ENCODE measurements at regions of chr6 and their contacts with region 1.

Region 1: DNA sequence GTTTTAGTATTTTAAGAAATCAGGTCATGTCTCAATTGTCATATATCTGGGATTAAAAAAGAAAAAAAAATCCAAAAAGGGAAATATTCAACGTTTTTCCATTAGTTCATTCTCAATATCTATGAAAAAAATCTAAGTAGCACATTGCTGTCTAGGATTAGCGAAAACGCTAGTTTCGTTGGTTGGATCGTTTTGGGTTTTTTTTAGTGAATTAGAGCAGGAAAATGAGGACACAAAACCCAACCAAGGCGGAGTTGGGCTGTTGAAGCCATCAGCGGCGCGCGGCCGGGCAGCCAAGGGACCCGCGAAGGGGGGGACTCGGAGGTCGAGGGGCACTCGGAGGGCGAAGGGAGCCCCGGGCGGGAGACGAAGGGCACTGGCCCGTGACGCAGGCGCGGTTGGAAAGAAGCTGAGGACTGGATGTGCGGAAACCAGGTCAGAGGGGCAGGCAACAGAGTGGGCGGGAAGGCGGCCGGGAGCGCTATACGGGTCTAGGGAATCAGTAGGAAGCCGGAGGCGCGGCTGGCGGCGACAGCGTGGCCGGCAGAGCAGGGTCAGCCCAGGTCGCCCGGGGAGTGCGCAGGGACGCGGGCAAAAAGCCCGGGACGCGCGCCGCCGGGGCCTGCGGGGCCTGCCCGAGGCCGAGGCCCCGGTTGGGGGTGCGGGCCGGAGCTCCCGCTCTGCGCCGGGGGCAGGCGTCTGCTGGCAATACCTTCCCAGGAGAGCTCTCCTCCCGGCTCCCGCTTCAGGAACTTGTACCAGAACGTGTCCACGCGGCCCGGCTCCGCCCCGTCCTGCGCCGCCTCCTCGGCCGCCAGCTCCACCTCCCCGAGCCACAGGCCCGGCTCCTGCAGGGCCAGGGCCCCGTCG is 599 bp downstream of the EPM2A start:
- DNase-seq: peak; percentile 88 to 92
- ATAC-seq: peak; percentile 91 to 97 (median 92)
- H3K4me3 ChIP-seq: peak overlapping the region; percentile 61 to 91 (median 73)
- H3K27ac ChIP-seq: peak overlapping the region; percentile 94 to 99 (median 97)
- H3K4me1 ChIP-seq: peaks cover 0 to 40% (median 21%) of the 10 kb centered on the region in 9 donors
- H3K27me3 ChIP-seq: no peaks in the 10 kb centered on the region
- CTCF ChIP-seq: no peak

Region 2: DNA sequence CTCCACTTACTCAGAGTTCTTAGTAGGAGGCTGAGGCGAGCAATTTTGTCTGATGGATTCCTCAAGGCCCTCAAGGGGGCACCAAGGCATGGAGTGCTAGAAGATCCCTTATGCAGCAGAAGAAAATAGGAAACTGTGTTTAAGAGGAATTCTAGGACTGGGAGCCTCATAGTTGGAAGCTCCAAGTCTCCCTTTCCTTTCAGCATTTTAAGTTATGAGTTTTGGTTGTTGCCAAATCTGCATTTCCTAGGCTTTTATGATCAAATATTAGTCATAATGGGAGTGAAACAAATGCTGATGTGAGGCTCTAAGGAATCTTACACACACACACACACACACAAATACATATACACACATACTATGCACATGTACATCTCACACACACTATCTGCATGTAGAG is 735.6 kb before region 1 on chr6:
- intact Hi-C with region 1: no loop called
- DNase-seq: no peak
- ATAC-seq: no peak
- H3K4me3 ChIP-seq: no peak overlapping the region
- H3K27ac ChIP-seq: no peak overlapping the region
- H3K4me1 ChIP-seq: no peaks in the 10 kb centered on the region
- H3K27me3 ChIP-seq: no peaks in the 10 kb centered on the region
- CTCF ChIP-seq: peak in 1 of 9 donors; percentile 8

Region 3: GRCh38 chr6:145368075-145368474 is 366.6 kb before region 1 on chr6:
- intact Hi-C with region 1: no loop called
- DNase-seq: peak in 1 of 2 donors; percentile 25
- ATAC-seq: peak in 7 of 8 donors; percentile 10 to 75 (median 52)
- H3K4me3 ChIP-seq: no peak overlapping the region
- H3K27ac ChIP-seq: no peak overlapping the region
- H3K4me1 ChIP-seq: peaks cover 0 to 12% (median 3%) of the 10 kb centered on the region in 9 donors
- H3K27me3 ChIP-seq: no peaks in the 10 kb centered on the region
- CTCF ChIP-seq: no peak

Region 4: DNA sequence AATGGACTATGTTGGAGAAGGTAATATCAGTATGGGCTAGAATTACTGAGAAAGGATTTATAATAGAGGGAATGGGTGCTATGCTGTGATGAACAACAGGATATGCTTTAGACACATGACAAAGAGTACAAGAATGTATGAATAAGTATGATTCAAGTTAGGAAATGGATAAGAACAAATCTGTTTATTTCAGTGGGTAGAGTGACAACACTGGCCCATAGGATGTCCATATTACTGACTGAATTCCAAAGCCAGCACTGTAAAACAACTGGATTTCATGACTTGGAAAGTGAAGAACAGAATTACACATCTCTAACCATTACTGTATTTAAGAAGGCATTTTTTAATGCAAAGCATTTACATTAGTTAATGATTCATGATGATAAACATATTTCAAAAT is 35.3 kb before region 1 on chr6:
- intact Hi-C with region 1: no loop called
- DNase-seq: no peak
- ATAC-seq: no peak
- H3K4me3 ChIP-seq: no peak overlapping the region
- H3K27ac ChIP-seq: no peak overlapping the region
- H3K4me1 ChIP-seq: peaks cover 0 to 5% (median 0%) of the 10 kb centered on the region in 9 donors
- H3K27me3 ChIP-seq: no peaks in the 10 kb centered on the region
- CTCF ChIP-seq: no peak

Region 5: DNA sequence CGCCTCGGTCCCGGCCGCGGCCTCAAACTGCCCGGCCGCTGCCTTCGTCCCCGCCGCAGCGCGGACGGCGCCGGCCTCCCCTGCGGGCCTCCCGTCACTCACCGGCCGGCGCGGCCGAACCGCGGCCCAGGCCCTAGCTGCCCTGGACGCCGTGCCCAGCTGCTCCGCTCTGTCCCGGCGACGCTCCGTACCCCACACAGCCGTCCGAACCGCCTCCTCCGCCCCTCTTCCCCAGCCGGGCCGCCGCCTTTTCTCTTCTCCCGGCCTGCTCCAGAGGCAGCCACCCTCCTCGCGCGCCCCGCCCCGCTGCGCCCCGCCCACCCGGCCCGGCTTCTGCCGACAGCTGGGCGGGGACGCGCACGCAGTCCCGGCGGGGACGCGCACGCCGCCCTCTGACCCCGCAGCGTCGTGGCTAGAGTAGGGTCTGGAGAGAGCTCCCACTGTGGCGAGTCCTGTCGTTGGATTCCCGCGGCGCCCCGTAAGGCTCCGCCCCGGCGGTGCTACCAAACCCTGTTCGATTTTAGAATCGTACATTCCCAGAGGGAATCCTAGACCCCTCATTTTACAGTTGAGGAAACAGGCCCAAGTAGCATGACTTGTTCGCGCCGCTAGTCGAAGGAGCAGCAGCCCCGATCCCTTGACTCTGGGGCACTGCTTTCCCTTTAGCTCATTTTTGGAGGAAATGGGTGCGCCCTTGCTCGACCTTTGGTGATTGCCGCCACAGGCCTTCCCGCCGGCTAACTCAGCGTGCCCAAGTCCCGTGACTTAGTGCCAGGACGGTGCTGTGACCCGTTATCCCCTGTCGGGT is 80.0 kb after region 1 on chr6 and contains the start of gene FBXO30:
- intact Hi-C with region 1: loop called in 7 of 10 experiments (anchors 2 to 10 kb)
- DNase-seq: peak; percentile 89 to 92
- ATAC-seq: peak; percentile 97 to 99 (median 98)
- H3K4me3 ChIP-seq: peak within 1 kb of the TSS; percentile 63 to 87 (median 79)
- H3K27ac ChIP-seq: peak within 1 kb of the TSS; percentile 92 to 98 (median 95)
- H3K4me1 ChIP-seq: peaks cover 0 to 79% (median 57%) of the 10 kb centered on the region in 9 donors
- H3K27me3 ChIP-seq: no peaks in the 10 kb centered on the region
- CTCF ChIP-seq: peak in 4 of 9 donors; percentile 15 to 38 (median 26)
- total RNA-seq, gene FBXO30: 10.6 to 18.4 (median 14.2) TPM

Region 6: DNA sequence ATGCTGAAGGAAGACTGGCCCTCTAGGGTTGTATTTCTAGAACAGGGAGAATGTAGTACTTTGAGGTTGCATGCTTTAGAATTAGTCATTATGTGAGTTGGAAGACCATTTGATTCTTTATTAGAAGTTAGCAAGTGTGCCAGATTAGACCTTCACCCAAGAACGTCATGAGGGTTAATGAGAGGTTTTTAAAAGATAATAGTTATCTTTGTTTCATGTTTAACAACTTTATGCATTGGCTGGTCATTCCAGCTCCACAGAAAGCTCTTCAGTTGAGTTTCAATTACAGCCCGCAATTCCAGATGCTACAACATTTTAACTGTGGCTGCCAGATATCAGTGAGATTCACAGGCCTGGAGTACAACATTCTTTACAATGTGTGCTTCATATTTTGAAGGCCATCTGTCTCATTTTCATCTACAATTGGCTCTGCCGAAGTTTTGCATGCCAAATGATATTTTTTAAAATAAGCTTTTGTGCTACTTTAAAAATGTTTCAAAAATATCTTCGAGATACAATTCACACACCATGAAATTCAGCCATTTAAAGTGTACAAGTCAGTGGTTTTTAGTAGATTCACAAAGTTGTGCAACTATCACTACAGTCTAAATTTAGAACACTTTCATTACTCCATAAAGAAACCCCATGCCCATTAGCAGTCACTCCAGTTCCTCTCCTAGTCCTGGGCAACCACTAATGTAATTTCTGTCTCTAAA is 140.9 kb after region 1 on chr6:
- intact Hi-C with region 1: loop called in 3 of 10 experiments (anchors 10 kb)
- DNase-seq: no peak
- ATAC-seq: peak in 6 of 8 donors; percentile 38 to 70 (median 48)
- H3K4me3 ChIP-seq: no peak overlapping the region
- H3K27ac ChIP-seq: peak overlapping the region in 2 of 10 donors; percentile 16 to 37
- H3K4me1 ChIP-seq: peaks cover 0 to 33% (median 12%) of the 10 kb centered on the region in 9 donors
- H3K27me3 ChIP-seq: no peaks in the 10 kb centered on the region
- CTCF ChIP-seq: no peak

Region 7: GRCh38 chr6:145887969-145888368 is 153.2 kb after region 1 on chr6:
- intact Hi-C with region 1: loop called in 3 of 10 experiments (anchors 5 to 10 kb)
- DNase-seq: peak; percentile 14 to 20
- ATAC-seq: peak in 5 of 8 donors; percentile 35 to 54 (median 46)
- H3K4me3 ChIP-seq: no peak overlapping the region
- H3K27ac ChIP-seq: no peak overlapping the region
- H3K4me1 ChIP-seq: peaks cover 0 to 4% (median 0%) of the 10 kb centered on the region in 9 donors
- H3K27me3 ChIP-seq: no peaks in the 10 kb centered on the region
- CTCF ChIP-seq: peak in 8 of 9 donors; percentile 16 to 66 (median 55)

Region 8: DNA sequence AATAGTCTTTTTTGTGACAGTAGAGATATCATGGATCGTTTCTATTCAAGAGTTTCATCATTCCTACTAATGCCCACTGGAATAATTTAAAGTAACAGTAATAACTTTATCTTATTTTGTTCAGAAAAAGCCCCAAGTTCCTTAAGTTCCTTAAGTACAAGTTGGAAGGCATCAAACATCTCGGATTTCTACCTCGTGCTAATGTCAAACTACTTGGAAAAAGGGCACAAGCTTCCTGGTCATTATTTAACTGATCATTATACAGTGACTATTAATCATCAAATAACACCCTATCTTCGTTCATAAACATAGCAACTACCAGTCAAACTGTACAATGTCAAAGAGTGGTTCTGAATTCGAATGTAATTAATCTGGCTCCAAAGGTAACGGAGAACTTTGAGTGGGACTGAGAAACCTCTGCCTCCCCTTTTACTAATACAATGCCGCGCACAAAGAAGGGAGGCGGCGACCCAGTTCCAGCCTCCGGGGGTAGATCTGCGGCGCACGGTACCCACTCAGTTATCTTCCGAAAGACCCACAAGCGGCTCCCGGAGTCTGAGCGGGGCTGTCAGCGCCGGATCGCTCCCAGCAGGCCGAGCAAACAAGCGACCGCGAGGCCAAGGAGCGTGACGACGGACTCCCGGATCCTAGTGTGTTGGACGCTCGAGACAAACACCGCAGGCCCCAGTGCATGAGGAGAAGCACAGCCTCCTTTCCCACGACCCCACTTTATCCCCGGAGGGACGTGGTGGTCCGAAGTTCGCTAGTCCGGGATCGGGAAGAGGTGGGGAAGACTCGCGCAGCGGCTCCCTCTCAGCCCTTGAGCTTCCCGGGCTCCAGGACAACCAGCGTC is 228.7 kb after region 1 on chr6:
- intact Hi-C with region 1: loop called in 4 of 10 experiments (anchors 5 to 10 kb)
- DNase-seq: peak in 1 of 2 donors; percentile 58
- ATAC-seq: peak; percentile 39 to 72 (median 60)
- H3K4me3 ChIP-seq: peak overlapping the region; percentile 48 to 96 (median 84)
- H3K27ac ChIP-seq: peak overlapping the region; percentile 62 to 93 (median 92)
- H3K4me1 ChIP-seq: peaks cover 0 to 45% (median 37%) of the 10 kb centered on the region in 9 donors
- H3K27me3 ChIP-seq: no peaks in the 10 kb centered on the region
- CTCF ChIP-seq: no peak

Measured in heart right ventricle (tissue), 16 donors.